ENCODE measurements at regions of chrX and their contacts with region 1.

Region 1: DNA sequence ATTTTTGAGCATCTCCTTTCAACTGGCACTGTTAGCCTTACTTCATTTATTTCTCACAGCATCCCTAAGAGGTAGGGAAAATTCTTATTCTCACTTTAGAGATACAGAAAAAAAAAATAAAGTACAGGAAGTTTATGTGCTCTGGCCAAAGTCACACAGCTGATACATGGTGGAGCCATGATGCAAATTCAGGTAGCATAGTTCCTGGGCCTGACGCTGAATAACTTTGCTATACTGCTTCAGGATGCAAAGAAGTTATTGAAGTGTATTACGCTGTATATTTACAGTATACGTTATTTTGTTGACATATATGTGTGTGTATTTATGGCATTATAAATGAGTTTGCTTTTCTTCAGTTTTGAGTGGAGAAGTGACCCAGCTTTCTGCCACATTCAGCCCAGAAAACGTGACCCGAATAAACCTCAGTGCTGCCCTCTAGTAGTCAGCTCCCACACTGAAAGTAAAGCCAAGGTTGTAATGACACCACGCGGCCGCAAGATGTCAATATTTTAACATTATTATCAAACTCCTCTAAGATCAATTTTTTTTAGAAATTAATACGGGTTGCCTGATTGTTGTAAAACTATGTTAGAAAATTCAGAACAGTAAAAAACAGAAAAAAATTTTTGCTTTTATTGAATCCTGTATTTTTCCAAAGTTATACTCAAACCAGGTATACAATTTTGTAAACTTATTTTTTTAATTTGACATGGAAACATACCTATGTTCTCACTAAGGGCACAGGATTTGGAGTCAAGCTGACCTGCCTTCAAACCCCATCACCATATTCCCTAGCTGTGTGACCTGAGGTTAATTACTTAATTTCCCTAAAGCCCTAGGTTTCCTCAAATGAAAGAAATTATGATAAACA is 3.8 kb upstream of the GUCY2F start:
- DNase-seq: peak; percentile 34
- H3K4me3 ChIP-seq: no peak overlapping the region
- H3K27ac ChIP-seq: no peak overlapping the region
- H3K4me1 ChIP-seq: no peaks in the 10 kb centered on the region
- H3K27me3 ChIP-seq: no peaks in the 10 kb centered on the region
- CTCF ChIP-seq: peak; percentile 35 to 82 (median 76)
- POLR2A ChIP-seq: no peak

Region 2: DNA sequence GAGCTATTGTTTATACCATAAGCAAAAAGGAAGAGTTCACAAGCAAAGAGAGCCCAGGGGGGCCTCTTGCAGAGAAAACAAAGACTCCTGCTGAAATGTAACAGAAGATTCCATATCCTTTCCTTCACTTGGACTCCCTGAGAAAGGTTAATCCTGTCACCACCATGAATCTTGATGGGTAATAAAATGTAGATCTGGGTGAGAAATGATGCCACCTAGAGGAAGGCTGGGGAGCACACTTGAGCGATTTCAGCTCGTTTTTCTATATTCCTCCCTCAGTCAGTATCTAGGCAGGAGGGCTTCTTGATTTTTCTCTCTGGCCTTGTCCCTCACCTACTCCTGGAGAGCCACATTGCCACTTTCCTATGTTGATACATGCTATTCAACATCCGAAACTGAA is 149.5 kb after region 1 on chrX:
- intact Hi-C with region 1: loop called (anchors 10 kb)
- DNase-seq: no peak
- H3K4me3 ChIP-seq: no peak overlapping the region
- H3K27ac ChIP-seq: no peak overlapping the region
- H3K4me1 ChIP-seq: no peaks in the 10 kb centered on the region
- H3K27me3 ChIP-seq: no peaks in the 10 kb centered on the region
- CTCF ChIP-seq: peak in 1 of 4 experiments; percentile 12
- POLR2A ChIP-seq: no peak

Region 3: GRCh38 chrX:109793191-109793590 is 307.5 kb after region 1 on chrX:
- intact Hi-C with region 1: no loop called
- DNase-seq: no peak
- H3K4me3 ChIP-seq: no peak overlapping the region
- H3K27ac ChIP-seq: no peak overlapping the region
- H3K4me1 ChIP-seq: no peaks in the 10 kb centered on the region
- H3K27me3 ChIP-seq: no peaks in the 10 kb centered on the region
- CTCF ChIP-seq: no peak
- POLR2A ChIP-seq: no peak

Region 4: DNA sequence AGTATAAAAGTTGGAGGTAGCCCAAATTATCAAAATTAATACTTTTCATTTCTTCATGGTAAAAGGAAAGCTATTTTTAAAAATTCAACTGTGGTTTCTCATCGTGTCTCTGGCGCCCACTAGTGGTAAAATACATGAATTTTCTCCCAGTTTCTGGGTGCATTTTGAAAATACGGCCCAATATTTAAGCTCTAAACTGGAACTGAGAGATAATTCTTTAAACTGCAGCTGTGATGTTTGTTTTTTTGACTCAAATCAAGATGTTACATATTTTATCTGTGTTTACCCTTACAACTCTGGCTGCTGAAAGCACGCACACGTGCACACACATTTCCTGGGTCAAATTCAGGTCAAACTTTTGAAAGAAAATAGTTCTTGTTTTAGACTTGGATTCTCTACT is 371.3 kb after region 1 on chrX:
- intact Hi-C with region 1: loop called (anchors 10 kb)
- DNase-seq: no peak
- H3K4me3 ChIP-seq: no peak overlapping the region
- H3K27ac ChIP-seq: no peak overlapping the region
- H3K4me1 ChIP-seq: no peaks in the 10 kb centered on the region
- H3K27me3 ChIP-seq: no peaks in the 10 kb centered on the region
- CTCF ChIP-seq: peak; percentile 46 to 67 (median 62)
- POLR2A ChIP-seq: no peak

Region 5: GRCh38 chrX:109886122-109886761 is 400.5 kb after region 1 on chrX:
- intact Hi-C with region 1: loop called (anchors 10 kb)
- DNase-seq: peak; percentile 6
- H3K4me3 ChIP-seq: no peak overlapping the region
- H3K27ac ChIP-seq: no peak overlapping the region
- H3K4me1 ChIP-seq: no peaks in the 10 kb centered on the region
- H3K27me3 ChIP-seq: no peaks in the 10 kb centered on the region
- CTCF ChIP-seq: peak; percentile 12 to 59 (median 40)
- POLR2A ChIP-seq: no peak

Measured in prostate gland (tissue), 2 donors.